ENCODE measurements at regions of chr15 and their contacts with region 1.

Region 1: DNA sequence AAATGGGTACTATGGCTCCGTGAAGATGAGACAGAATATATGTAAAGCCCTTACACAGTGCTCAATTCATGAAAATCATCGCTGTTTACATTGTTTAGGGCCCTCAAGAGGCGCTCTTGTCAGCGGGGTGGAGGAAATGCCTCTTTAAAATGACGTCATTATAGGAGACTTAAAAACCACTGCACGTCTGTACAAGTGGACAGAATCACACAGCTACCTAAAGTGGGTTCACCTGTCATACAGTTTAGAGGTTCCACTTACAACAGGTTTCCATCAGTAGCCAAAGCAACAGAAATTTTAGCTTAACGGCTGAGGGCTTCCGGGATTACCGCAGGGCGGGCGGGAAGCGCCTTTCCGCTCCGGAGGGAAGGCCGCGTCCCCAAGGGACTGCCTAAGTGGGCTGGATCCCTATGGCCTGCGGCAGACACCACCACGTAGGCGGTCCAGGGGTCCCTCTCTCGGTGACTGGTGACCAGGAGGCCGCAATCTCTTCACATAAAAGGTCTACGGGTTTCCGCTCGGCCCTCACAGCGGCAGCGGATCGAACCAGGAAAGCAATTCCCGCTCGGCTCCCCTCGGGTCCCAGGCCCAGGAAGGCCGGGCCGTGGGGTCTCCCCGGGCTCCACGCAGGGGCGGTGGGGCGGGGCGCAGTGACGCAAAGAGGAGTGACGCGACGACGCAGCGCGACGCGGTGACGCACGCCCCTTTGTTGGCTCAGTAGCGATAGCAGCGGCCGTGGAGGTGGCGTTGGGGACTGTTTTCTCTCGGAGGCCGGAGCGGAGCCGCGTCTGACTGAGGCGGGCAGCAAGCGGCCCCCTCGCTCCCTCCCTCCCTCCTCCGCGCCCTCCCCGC is at the start of gene ARIH1:
- DNase-seq: peak; percentile 92 to 96
- ATAC-seq: peak; percentile 88 to 90
- H3K4me3 ChIP-seq: peak within 1 kb of the TSS; percentile 86 to 88 (median 86)
- H3K27ac ChIP-seq: peak within 1 kb of the TSS; percentile 98 to 100 (median 99)
- H3K4me1 ChIP-seq: peaks cover 32 to 41% of the 10 kb centered on the region in 2 donors
- H3K27me3 ChIP-seq: no peaks in the 10 kb centered on the region
- CTCF ChIP-seq: peak in 3 of 5 experiments; percentile 23 to 40 (median 34)
- POLR2A ChIP-seq: peak; percentile 98 to 99
- total RNA-seq, gene ARIH1: 46.3 to 85.6 (median 68.3) TPM

Region 2: GRCh38 chr15:72105111-72105510 is 368.7 kb before region 1 on chr15:
- in situ Hi-C with region 1: no loop called
- intact Hi-C with region 1: loop called (anchors 5 kb)
- DNase-seq: no peak
- ATAC-seq: no peak
- H3K4me3 ChIP-seq: no peak overlapping the region
- H3K27ac ChIP-seq: no peak overlapping the region
- H3K4me1 ChIP-seq: peaks cover 43 to 46% of the 10 kb centered on the region in 2 donors
- H3K27me3 ChIP-seq: no peaks in the 10 kb centered on the region
- CTCF ChIP-seq: no peak
- POLR2A ChIP-seq: no peak

Region 3: DNA sequence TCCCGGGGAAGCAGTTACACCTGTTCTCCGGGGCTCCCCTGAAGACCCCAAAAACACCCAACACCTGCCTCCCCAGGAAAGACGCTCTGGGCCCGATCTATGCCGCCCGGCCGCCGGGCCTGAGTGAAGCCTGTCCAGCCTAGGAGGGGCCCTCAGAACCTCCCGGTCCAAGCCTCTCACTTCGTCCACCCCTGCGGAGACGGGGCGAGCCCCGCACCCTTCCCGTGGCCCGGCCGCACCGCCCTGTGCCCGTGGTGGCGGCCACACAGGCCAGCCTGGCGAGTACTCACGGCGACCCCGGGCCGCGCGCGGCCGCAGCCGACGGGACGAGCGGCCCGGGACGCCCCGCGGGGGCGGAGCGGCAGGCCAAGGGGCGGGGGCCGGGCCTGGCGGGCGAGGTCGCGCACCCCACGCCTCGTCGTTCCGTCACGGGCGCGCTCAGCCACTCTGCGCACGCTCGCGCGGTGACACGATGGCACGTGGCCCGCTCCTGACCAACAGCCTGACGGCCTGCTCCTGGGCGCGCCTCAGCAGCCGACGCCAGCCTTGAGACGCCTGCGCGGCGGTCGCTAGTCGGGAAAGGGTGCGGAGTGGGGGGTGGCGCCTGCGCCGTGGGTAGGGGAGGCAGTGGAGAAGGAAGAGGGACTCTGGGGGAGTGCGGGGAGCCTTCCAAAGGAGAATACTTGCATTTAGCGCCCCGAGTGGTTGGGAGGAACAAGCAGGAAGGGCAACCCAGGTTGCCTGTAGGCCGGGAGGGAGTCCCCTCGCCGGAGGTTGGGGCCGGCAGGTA is 201.4 kb before region 1 on chr15 and contains the start of gene PARP6:
- in situ Hi-C with region 1: no loop called
- intact Hi-C with region 1: loop called (anchors 1 kb)
- DNase-seq: peak; percentile 97 to 99
- ATAC-seq: peak; percentile 91 to 95
- H3K4me3 ChIP-seq: peak within 1 kb of the TSS; percentile 63 to 98 (median 70)
- H3K27ac ChIP-seq: peak within 1 kb of the TSS; percentile 89 to 97 (median 94)
- H3K4me1 ChIP-seq: peaks cover 26 to 29% of the 10 kb centered on the region in 2 donors
- H3K27me3 ChIP-seq: no peaks in the 10 kb centered on the region
- CTCF ChIP-seq: peak; percentile 66 to 78 (median 70)
- POLR2A ChIP-seq: peak; percentile 82 to 89
- total RNA-seq, gene PARP6: 51.7 to 84.7 (median 66.9) TPM

Region 4: DNA sequence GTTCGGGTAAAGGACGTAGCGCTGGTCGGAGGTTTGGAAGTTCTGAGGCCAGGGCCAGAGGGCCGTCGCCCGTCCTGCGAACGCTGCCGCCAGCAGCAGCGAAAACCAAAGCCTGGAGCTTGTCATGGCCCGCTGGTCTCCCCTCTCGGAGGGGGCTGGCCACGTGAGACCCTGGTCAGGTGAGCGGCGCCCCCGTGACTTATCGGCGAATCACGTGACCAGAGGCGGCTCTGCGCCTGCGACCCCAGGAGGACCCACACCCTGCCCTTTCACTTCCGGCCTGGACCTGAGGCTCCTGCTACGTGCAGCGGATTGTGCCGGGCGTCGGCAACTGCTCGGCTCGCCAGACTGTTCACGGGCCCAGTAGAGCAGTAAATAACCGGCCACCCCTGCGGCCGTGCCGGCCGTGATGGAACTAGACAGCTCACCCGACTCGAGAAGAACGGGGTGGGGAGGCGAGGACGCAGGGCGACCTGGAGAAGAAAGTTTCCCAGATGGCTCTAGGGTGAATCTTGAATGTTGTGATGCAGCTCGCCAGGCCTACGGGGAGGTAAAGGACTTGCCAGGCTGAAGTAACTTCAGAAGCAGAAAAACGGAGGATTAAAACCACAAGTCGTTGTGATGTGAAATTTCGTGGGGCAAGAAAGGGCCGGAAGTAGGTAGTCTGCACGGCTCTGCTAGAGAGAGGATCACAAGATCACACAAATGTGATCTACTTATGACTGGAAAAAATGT is 97.8 kb before region 1 on chr15 and contains the start of gene HEXA:
- in situ Hi-C with region 1: loop called in 1 of 4 experiments (anchors 10 kb)
- intact Hi-C with region 1: loop called (anchors 5 kb)
- DNase-seq: peak; percentile 95 to 98
- ATAC-seq: peak; percentile 95 to 96
- H3K4me3 ChIP-seq: peak within 1 kb of the TSS; percentile 79 to 95 (median 89)
- H3K27ac ChIP-seq: peak within 1 kb of the TSS; percentile 91 to 94 (median 93)
- H3K4me1 ChIP-seq: peaks cover 33 to 35% of the 10 kb centered on the region in 2 donors
- H3K27me3 ChIP-seq: no peaks in the 10 kb centered on the region
- CTCF ChIP-seq: peak in 2 of 5 experiments; percentile 35 to 62
- POLR2A ChIP-seq: peak; percentile 73 to 81
- total RNA-seq, gene HEXA: 29.4 to 51.5 (median 40.0) TPM

Region 5: DNA sequence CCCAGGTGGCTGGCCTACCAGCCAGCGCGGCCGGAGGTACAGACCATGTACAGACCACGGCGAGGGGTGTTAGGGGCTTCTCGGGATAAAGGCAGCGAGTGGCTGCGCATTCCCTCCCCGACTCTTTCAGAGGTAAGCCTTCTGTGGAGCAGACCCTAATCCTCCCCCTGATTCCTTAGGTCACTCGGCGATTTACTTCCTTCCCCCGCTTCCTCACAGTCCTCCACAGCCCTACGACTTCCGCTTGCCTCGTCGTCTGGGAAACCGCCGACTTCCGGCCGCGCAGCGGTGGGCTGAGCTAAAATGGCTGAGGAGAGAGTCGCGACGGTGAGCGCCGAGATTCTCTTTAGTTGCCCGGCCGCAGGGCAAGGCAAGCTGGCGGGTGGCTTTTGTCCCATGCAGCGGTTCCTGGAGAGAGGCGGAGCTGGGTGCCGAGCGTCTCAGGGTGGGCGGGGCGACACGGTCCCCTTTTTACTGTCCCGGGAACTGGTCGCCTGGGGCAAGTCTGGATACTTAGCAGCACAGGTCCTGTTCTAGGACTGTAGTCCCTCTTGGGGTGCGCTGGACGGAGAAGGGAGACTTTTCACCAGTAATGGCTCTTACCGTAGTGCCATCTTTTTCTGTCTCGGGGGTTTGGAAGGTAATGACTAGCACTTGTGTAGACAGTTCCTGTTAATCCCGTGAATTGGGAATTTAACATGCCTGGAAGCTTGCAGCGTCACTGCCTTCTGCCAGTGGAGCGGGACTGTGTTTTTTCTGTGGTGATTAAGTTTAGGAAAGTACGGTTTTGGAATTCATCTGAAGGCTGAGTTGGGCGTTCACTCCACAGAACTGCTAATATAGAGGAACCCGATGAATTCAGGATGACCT is 212.3 kb after region 1 on chr15 and contains the starts of genes BBS4 and HIGD2B:
- in situ Hi-C with region 1: loop called in 2 of 4 experiments (anchors 25 kb)
- intact Hi-C with region 1: loop called (anchors 5 kb)
- DNase-seq: peak; percentile 65 to 81
- ATAC-seq: peak; percentile 96 to 97
- H3K4me3 ChIP-seq: peak within 1 kb of the TSS; percentile 67 to 83 (median 80)
- H3K27ac ChIP-seq: peak within 1 kb of the TSS; percentile 85 to 88 (median 86)
- H3K4me1 ChIP-seq: peaks cover 12 to 15% of the 10 kb centered on the region in 2 donors
- H3K27me3 ChIP-seq: no peaks in the 10 kb centered on the region
- CTCF ChIP-seq: no peak
- POLR2A ChIP-seq: peak; percentile 68 to 69
- total RNA-seq, gene BBS4: 21.6 to 37.0 (median 28.7) TPM
- total RNA-seq, gene HIGD2B: not detected

Region 6: GRCh38 chr15:73035221-73035620 is 561.4 kb after region 1 on chr15:
- in situ Hi-C with region 1: no loop called
- intact Hi-C with region 1: no loop called
- DNase-seq: no peak
- ATAC-seq: no peak
- H3K4me3 ChIP-seq: no peak overlapping the region
- H3K27ac ChIP-seq: no peak overlapping the region
- H3K4me1 ChIP-seq: no peaks in the 10 kb centered on the region
- H3K27me3 ChIP-seq: no peaks in the 10 kb centered on the region
- CTCF ChIP-seq: no peak
- POLR2A ChIP-seq: no peak

Region 7: GRCh38 chr15:73357999-73358665 is 884.3 kb after region 1 on chr15:
- in situ Hi-C with region 1: no loop called
- intact Hi-C with region 1: no loop called
- DNase-seq: no peak
- ATAC-seq: no peak
- H3K4me3 ChIP-seq: no peak overlapping the region
- H3K27ac ChIP-seq: no peak overlapping the region
- H3K4me1 ChIP-seq: no peaks in the 10 kb centered on the region
- H3K27me3 ChIP-seq: peaks cover 0 to 8% (median 5%) of the 10 kb centered on the region in 3 donors
- CTCF ChIP-seq: no peak
- POLR2A ChIP-seq: no peak

Measured in gastrocnemius medialis (tissue), 4 donors.